Posterior vena cava (tissue), 2 donors: ENCODE measurements at regions of chr5 and their contacts with region 1.

Region 1: DNA sequence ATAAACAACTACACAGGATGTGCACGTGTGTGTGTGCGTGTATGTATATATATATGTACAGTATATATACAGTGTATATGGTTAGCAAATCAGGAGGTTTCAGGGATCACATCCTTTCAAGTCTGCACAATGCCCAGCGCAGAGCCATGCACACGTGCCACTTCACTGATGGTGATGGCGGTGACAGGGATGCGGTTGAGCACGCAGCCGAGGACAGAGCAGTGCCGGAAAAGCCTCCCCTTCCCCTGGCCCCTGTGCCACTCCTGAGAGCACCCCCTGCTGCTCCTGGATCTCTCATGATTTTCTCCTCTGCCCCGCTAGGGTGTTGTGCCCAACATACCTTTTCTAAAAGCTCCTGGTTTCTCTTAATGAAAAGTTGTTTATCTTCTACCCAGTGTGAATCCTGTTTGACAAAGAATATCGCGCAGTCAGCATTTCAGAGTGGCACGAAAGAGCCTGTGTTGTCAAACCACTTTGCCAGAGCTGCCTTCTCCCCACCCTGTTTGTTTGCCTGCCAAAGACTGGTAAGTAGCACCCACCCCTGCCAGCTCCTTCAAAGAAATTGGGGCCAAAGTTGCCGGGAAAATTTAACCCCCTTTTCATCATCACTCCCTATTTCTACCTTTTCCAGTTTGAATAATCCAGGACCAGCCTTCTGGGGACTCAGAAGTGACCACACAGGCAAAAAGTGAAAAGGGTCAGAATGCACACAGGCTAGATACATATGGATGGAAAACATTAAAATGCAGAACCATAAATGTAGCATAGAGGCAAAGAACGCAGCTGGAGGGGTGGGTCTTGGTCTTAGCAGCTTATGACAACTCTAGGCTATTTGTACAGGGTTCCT is 126.2 kb upstream of the DPYSL3 start:
- DNase-seq: no peak

Region 2: GRCh38 chr5:147693233-147693632 is 57.1 kb after region 1 on chr5:
- intact Hi-C with region 1: loop called in 1 of 2 experiments (anchors 2 kb)
- DNase-seq: no peak

Region 3: GRCh38 chr5:148224131-148224742 is 588.1 kb after region 1 on chr5:
- intact Hi-C with region 1: no loop called
- DNase-seq: no peak